ENCODE measurements at regions of chr2 and their contacts with region 1.

Region 1: GRCh38 chr2:72150157-72150865 is 2.6 kb upstream of the CYP26B1 start:
- DNase-seq: peak in 4 of 5 donors; percentile 44 to 54 (median 47)
- H3K4me3 ChIP-seq: no peak overlapping the region
- H3K4me3 Mint-ChIP-seq: peak overlapping the region; percentile 77 to 96 (median 86)
- H3K27ac ChIP-seq: no peak overlapping the region
- H3K27ac Mint-ChIP-seq: peak overlapping the region in 1 of 7 donors; percentile 16
- H3K4me1 ChIP-seq: peaks cover 36% of the 10 kb centered on the region
- H3K4me1 Mint-ChIP-seq: peaks cover 24 to 47% (median 37%) of the 10 kb centered on the region in 4 donors
- H3K27me3 ChIP-seq: peaks cover 33% of the 10 kb centered on the region
- H3K27me3 Mint-ChIP-seq: peaks cover 48 to 52% of the 10 kb centered on the region in 2 donors

Region 2: GRCh38 chr2:71545572-71546274 is 604.6 kb before region 1 on chr2:
- CTCF ChIA-PET with region 1: interaction called, 11 read pairs
- POLR2A ChIA-PET with region 1: no interaction called
- intact Hi-C with region 1: loop called (anchors 1 kb)
- DNase-seq: peak in 4 of 5 donors; percentile 20 to 39 (median 28)
- H3K4me3 ChIP-seq: peak overlapping the region in 1 of 2 donors; percentile 22
- H3K4me3 Mint-ChIP-seq: peak overlapping the region; percentile 55 to 82 (median 70)
- H3K27ac ChIP-seq: no peak overlapping the region
- H3K27ac Mint-ChIP-seq: peak overlapping the region in 3 of 7 donors; percentile 4 to 80 (median 38)
- H3K4me1 ChIP-seq: peaks cover 6% of the 10 kb centered on the region
- H3K4me1 Mint-ChIP-seq: peaks cover 8 to 15% (median 12%) of the 10 kb centered on the region in 4 donors
- H3K27me3 ChIP-seq: no peaks in the 10 kb centered on the region
- H3K27me3 Mint-ChIP-seq: peaks cover 10 to 16% of the 10 kb centered on the region in 2 donors

Region 3: GRCh38 chr2:72745679-72746368 is 595.5 kb after region 1 on chr2:
- CTCF ChIA-PET with region 1: no interaction called
- POLR2A ChIA-PET with region 1: no interaction called
- intact Hi-C with region 1: loop called (anchors 5 kb)
- DNase-seq: peak in 4 of 5 donors; percentile 15 to 22 (median 17)
- H3K4me3 ChIP-seq: no peak overlapping the region
- H3K4me3 Mint-ChIP-seq: no peak overlapping the region
- H3K27ac ChIP-seq: no peak overlapping the region
- H3K27ac Mint-ChIP-seq: no peak overlapping the region
- H3K4me1 ChIP-seq: no peaks in the 10 kb centered on the region
- H3K4me1 Mint-ChIP-seq: peaks cover 0 to 1% (median 0%) of the 10 kb centered on the region in 4 donors
- H3K27me3 ChIP-seq: no peaks in the 10 kb centered on the region
- H3K27me3 Mint-ChIP-seq: no peaks in the 10 kb centered on the region

Measured in CD4-positive, alpha-beta memory T cell (primary cell).